ENCODE measurements at regions of chr3 and their contacts with region 1.

Region 1: GRCh38 chr3:48847504-48848423 is at the start of gene PRKAR2A:
- DNase-seq: peak; percentile 82
- H3K4me3 ChIP-seq: peak within 1 kb of the TSS; percentile 79 to 95 (median 80)
- H3K27ac ChIP-seq: peak within 1 kb of the TSS; percentile 62
- H3K4me1 ChIP-seq: peaks cover 3% of the 10 kb centered on the region
- H3K27me3 ChIP-seq: no peaks in the 10 kb centered on the region
- CTCF ChIP-seq: no peak
- total RNA-seq, gene PRKAR2A: 41.3 to 64.7 TPM

Region 2: DNA sequence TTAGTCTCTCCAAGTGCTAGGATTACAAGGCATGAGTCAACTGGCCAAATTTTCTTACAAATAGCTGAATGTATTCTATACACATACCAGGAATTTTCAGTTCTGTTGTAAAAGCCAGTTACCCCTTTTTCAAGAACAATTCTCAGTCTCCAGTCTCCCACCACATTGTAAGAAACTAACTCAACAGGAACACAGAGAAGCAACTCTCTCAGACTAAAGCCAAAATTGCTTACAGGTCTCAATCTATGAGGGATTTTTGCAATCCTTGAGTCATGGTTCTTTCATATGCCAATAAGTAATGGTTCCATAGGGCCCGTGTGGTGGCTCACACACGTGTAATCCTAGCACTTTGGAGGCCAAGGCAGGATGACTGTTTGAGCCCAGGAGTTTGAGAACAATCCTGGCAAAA is 139.3 kb before region 1 on chr3:
- CTCF ChIA-PET with region 1: no interaction called
- dilution Hi-C with region 1: no loop called
- in situ Hi-C with region 1: no loop called
- intact Hi-C with region 1: loop called (anchors 5 kb)
- DNase-seq: peak; percentile 52
- H3K4me3 ChIP-seq: no peak overlapping the region
- H3K27ac ChIP-seq: peak overlapping the region; percentile 92
- H3K4me1 ChIP-seq: peaks cover 39% of the 10 kb centered on the region
- H3K27me3 ChIP-seq: no peaks in the 10 kb centered on the region
- CTCF ChIP-seq: no peak

Region 3: GRCh38 chr3:48898383-48899234 is 50.8 kb after region 1 on chr3 and contains the start of gene SLC25A20:
- CTCF ChIA-PET with region 1: no interaction called
- dilution Hi-C with region 1: no loop called
- in situ Hi-C with region 1: no loop called
- intact Hi-C with region 1: loop called (anchors 1 kb)
- DNase-seq: peak; percentile 86
- H3K4me3 ChIP-seq: peak within 1 kb of the TSS; percentile 53 to 75 (median 71)
- H3K27ac ChIP-seq: no peak within 1 kb of the TSS
- H3K4me1 ChIP-seq: peaks cover 14% of the 10 kb centered on the region
- H3K27me3 ChIP-seq: no peaks in the 10 kb centered on the region
- CTCF ChIP-seq: peak in 1 of 2 donors; percentile 13
- total RNA-seq, gene SLC25A20: 11.3 to 17.8 TPM

Region 4: GRCh38 chr3:48918388-48919214 is 70.8 kb after region 1 on chr3 and contains the start of gene ARIH2:
- CTCF ChIA-PET with region 1: no interaction called
- dilution Hi-C with region 1: no loop called
- in situ Hi-C with region 1: no loop called
- intact Hi-C with region 1: loop called (anchors 1 kb)
- DNase-seq: peak; percentile 90
- H3K4me3 ChIP-seq: peak within 1 kb of the TSS; percentile 64 to 98 (median 76)
- H3K27ac ChIP-seq: peak within 1 kb of the TSS; percentile 90
- H3K4me1 ChIP-seq: peaks cover 18% of the 10 kb centered on the region
- H3K27me3 ChIP-seq: no peaks in the 10 kb centered on the region
- CTCF ChIP-seq: peak in 1 of 2 donors; percentile 19
- total RNA-seq, gene ARIH2: 84.7 to 115 TPM

Region 5: GRCh38 chr3:48952510-48953118 is 104.8 kb after region 1 on chr3:
- CTCF ChIA-PET with region 1: no interaction called
- dilution Hi-C with region 1: loop called (anchors 5 kb)
- in situ Hi-C with region 1: no loop called
- intact Hi-C with region 1: no loop called
- DNase-seq: peak; percentile 33
- H3K4me3 ChIP-seq: no peak overlapping the region
- H3K27ac ChIP-seq: no peak overlapping the region
- H3K4me1 ChIP-seq: peaks cover 3% of the 10 kb centered on the region
- H3K27me3 ChIP-seq: no peaks in the 10 kb centered on the region
- CTCF ChIP-seq: peak; percentile 44 to 56

Region 6: DNA sequence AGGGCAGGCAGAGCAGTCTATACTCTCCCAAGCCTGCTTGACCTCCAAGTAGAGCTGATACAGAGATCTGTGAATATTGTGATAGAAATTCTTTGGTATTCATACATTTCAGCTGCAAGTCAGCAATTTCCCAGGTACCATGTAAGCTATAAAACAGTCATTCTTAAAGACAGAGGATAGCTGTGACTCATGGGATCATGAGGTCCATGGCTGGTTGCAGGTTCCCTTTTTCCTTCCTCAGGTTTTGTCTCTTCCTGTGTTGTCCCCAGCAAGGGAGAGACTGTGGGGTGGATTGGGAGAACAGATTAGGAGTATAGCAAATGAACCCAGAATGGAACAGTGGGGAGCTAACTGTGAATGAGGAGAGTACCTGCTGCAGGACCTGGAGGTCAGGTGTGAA is 136.9 kb after region 1 on chr3:
- CTCF ChIA-PET with region 1: no interaction called
- dilution Hi-C with region 1: no loop called
- in situ Hi-C with region 1: no loop called
- intact Hi-C with region 1: no loop called
- DNase-seq: peak; percentile 19
- H3K4me3 ChIP-seq: no peak overlapping the region
- H3K27ac ChIP-seq: no peak overlapping the region
- H3K4me1 ChIP-seq: peaks cover 8% of the 10 kb centered on the region
- H3K27me3 ChIP-seq: no peaks in the 10 kb centered on the region
- CTCF ChIP-seq: no peak

Region 7: DNA sequence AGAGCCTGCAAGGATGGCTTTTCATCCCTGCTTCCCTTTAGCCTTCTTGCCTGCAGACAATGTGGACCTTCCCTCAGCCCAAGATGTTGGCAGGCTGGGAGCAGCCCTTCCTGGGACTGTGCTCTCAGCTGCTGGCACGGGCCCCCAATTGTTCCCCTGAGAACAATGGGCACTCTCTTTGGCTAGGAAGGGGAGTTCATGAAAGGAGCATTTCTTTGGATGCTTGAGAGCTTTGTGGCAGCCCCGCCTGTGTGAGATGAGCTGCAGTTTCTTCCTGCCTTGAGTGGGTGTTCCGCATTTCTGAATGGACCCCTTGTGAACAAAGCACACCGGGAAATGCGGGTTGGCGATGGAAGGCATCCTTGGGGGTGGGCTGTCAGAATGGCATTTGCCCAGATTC is 671.5 kb after region 1 on chr3:
- CTCF ChIA-PET with region 1: no interaction called
- dilution Hi-C with region 1: no loop called
- in situ Hi-C with region 1: no loop called
- intact Hi-C with region 1: no loop called
- DNase-seq: peak; percentile 19
- H3K4me3 ChIP-seq: no peak overlapping the region
- H3K27ac ChIP-seq: no peak overlapping the region
- H3K4me1 ChIP-seq: peaks cover 33% of the 10 kb centered on the region
- H3K27me3 ChIP-seq: no peaks in the 10 kb centered on the region
- CTCF ChIP-seq: no peak

Measured in mammary epithelial cell (primary cell).